ENCODE measurements at regions of chr1 and their contacts with region 1.

Region 1: DNA sequence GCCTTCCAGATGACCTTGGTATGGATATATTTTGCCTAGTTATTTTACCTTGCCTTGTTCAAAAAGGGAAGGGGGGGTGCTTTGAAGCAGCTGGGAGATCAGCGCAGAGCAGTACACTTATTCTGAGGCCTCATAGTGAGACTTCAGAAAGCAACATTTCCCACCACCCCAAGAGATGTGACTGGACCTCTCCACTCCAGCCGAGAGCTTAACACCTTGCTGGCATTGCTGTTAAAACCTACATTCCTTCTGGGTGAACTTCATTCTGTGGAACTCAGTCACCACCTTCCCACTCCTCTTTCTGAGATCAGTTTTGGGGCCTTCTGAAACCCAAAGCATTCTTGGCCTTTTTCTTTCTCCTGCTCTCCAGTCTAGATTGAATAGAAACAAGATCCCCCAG is 148.7 kb downstream of the BARHL2 start:
- DNase-seq: no peak
- ATAC-seq: no peak
- H3K4me3 ChIP-seq: no peak overlapping the region
- H3K4me3 Mint-ChIP-seq: no peak overlapping the region
- H3K27ac ChIP-seq: no peak overlapping the region
- H3K27ac Mint-ChIP-seq: no peak overlapping the region
- H3K4me1 ChIP-seq: no peaks in the 10 kb centered on the region
- H3K4me1 Mint-ChIP-seq: no peaks in the 10 kb centered on the region
- H3K27me3 ChIP-seq: no peaks in the 10 kb centered on the region
- H3K27me3 Mint-ChIP-seq: peaks cover 8% of the 10 kb centered on the region
- CTCF ChIP-seq: no peak

Region 2: GRCh38 chr1:90579212-90579802 is 10.9 kb after region 1 on chr1:
- CTCF ChIA-PET with region 1: interaction called, 12 read pairs
- POLR2A ChIA-PET with region 1: no interaction called
- intact Hi-C with region 1: no loop called
- DNase-seq: peak in 2 of 9 experiments; percentile 37 to 50
- ATAC-seq: no peak
- H3K4me3 ChIP-seq: no peak overlapping the region
- H3K4me3 Mint-ChIP-seq: no peak overlapping the region
- H3K27ac ChIP-seq: no peak overlapping the region
- H3K27ac Mint-ChIP-seq: no peak overlapping the region
- H3K4me1 ChIP-seq: no peaks in the 10 kb centered on the region
- H3K4me1 Mint-ChIP-seq: no peaks in the 10 kb centered on the region
- H3K27me3 ChIP-seq: peaks cover 2 to 3% of the 10 kb centered on the region in 2 experiments
- H3K27me3 Mint-ChIP-seq: no peaks in the 10 kb centered on the region
- CTCF ChIP-seq: peak; percentile 56

Region 3: DNA sequence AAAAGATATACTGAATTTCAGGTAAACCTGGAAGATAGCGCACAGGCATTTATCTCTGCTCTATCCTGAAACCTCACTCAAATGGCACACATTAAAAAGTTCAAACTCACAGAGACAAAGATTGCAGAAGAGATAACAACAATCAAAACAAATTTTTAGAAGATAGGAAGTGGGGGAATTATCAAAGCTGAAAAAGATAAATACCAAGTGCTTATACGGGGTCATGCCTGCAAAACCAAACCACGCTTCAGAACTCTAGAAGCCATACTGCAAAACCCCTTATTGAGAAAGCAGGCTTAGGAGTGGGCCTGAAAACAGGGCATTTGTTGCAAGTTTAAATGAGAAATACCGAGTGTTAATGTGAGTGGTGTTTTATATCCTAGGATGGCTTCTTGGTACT is 71.9 kb after region 1 on chr1:
- CTCF ChIA-PET with region 1: no interaction called
- POLR2A ChIA-PET with region 1: no interaction called
- intact Hi-C with region 1: no loop called
- DNase-seq: no peak
- ATAC-seq: no peak
- H3K4me3 ChIP-seq: no peak overlapping the region
- H3K4me3 Mint-ChIP-seq: no peak overlapping the region
- H3K27ac ChIP-seq: no peak overlapping the region
- H3K27ac Mint-ChIP-seq: no peak overlapping the region
- H3K4me1 ChIP-seq: no peaks in the 10 kb centered on the region
- H3K4me1 Mint-ChIP-seq: no peaks in the 10 kb centered on the region
- H3K27me3 ChIP-seq: peaks cover 0 to 5% of the 10 kb centered on the region in 2 experiments
- H3K27me3 Mint-ChIP-seq: peaks cover 16% of the 10 kb centered on the region
- CTCF ChIP-seq: no peak

Region 4: DNA sequence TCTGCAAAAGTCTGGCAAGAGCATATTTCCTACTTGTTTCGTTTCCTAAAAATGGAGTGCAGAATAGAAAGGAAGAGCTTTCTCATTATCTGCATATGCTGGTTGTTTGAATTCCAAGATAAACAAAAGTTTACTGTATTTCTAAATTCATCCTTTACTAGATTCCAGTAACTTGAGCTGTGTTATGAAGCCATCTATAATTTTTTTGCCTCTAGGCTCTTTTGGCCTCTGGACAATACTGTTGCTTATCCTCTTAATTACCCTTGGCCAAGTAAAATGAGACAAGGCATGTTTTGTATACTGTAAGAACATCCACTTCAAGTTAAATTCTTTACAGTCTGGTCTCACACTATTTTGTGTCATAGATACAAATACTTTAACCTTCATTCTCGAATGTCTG is 881.8 kb after region 1 on chr1:
- CTCF ChIA-PET with region 1: no interaction called
- POLR2A ChIA-PET with region 1: no interaction called
- intact Hi-C with region 1: no loop called
- DNase-seq: no peak
- ATAC-seq: no peak
- H3K4me3 ChIP-seq: no peak overlapping the region
- H3K4me3 Mint-ChIP-seq: no peak overlapping the region
- H3K27ac ChIP-seq: no peak overlapping the region
- H3K27ac Mint-ChIP-seq: no peak overlapping the region
- H3K4me1 ChIP-seq: no peaks in the 10 kb centered on the region
- H3K4me1 Mint-ChIP-seq: no peaks in the 10 kb centered on the region
- H3K27me3 ChIP-seq: no peaks in the 10 kb centered on the region
- H3K27me3 Mint-ChIP-seq: peaks cover 3% of the 10 kb centered on the region
- CTCF ChIP-seq: no peak